ENCODE measurements at regions of chr2 and their contacts with region 1.

Region 1: DNA sequence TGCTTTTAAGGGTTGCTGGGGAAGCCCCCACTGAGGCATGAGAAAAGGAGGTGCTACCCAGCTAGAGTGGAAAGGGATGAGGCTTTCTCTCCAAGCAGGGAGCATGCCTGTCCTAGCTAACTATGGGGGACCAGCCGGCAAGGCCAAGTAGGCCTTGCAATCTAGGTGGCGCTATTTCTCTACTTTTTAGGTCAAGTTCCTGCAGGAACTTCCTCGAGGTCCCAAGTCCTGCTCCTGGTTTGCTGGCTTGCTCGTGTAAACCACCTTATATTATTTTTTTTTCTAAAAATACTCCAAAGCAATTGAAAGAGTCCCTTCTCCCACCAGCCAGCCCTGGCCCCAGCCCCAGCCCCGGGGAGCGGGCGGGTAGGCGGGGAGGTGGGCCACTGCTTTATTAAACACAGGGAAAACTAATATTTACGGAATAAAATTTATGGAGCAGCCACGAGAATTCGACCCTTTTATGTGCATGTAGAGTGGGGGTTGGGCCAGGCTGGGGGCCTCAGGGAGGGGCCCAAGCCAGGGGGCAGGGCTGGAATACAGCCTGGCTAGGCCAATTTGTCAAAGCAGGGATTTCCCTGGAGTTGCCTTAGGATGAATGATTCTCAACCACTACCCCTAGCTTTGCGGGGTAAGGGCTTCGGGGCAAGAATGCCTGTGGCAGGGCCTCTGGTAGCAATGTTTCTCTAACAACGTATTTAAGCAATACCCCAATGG is 12.8 kb upstream of the IHH start:
- DNase-seq: no peak
- H3K4me3 ChIP-seq: no peak overlapping the region
- H3K27ac ChIP-seq: no peak overlapping the region
- H3K4me1 ChIP-seq: peaks cover 13% of the 10 kb centered on the region
- H3K27me3 ChIP-seq: no peaks in the 10 kb centered on the region
- CTCF ChIP-seq: peak; percentile 70

Region 2: DNA sequence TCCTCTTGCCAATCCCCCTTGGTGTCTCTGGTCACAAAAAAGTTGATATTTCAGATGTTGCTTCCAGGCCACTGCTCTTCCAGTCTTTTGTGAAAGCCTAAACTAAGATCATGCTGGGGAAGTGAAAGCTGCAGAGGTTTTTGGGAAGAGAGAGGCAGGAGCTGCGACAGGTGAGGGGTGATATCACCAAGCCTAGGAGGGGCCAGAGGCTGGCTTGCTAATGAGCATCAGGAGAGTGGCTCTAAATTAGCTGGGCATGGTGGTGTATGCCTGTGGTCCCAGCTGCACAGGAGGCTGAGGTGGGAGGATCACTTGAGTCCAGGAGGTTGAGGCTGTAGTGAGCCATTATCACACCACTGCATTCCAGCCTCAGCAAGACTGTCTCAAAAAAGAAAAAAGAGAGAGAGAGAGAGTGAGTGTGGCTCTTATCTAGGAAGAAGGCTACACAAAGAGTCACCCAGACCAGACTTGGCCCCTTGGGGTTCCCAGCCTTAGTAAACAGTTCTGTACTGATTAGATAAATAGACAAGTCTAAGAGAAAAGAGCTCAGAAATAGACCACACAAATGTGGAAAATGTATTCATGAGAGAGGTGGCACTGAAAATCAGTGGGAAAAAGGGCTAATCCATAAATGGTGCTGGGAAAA is 128.7 kb before region 1 on chr2:
- CTCF ChIA-PET with region 1: interaction called, 12 read pairs
- POLR2A ChIA-PET with region 1: no interaction called
- intact Hi-C with region 1: no loop called
- DNase-seq: no peak
- H3K4me3 ChIP-seq: no peak overlapping the region
- H3K27ac ChIP-seq: no peak overlapping the region
- H3K4me1 ChIP-seq: no peaks in the 10 kb centered on the region
- H3K27me3 ChIP-seq: no peaks in the 10 kb centered on the region
- CTCF ChIP-seq: no peak

Region 3: DNA sequence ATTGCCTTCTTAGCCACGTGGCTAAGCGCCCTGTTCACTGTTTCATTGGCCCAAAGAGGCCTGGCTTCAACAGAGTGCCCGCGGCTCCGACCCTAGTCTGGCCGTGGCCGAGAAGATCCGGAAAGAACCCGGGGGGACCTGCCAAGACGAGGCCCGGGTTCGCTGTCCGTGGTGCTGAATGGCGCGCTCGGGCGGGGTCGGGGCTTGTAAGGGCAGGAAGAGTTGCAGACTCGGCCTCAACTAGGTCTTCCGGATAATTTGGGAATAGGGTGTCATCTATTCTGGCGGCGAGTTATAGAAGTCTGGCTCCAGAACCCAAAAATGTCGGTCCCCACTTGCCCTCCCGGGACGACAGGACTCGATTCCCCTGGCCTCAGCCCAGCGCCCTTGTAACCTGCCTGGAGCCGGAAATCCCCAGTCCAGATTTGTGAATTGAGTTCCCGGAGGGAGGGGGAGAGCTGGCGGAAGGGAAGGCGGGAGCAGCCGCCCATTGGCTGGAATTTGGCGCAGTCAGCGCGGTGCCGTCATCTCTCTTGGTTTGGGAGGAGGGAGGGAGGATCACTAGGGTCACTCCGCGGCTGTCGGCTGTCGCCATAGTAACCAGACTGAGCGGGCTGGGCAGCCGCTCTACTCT is 110.6 kb before region 1 on chr2:
- CTCF ChIA-PET with region 1: no interaction called
- POLR2A ChIA-PET with region 1: no interaction called
- intact Hi-C with region 1: no loop called
- DNase-seq: peak in 1 of 2 experiments; percentile 70
- H3K4me3 ChIP-seq: no peak overlapping the region
- H3K27ac ChIP-seq: no peak overlapping the region; the same call in 1 of the 2 replicates
- H3K4me1 ChIP-seq: peaks cover 17% of the 10 kb centered on the region
- H3K27me3 ChIP-seq: no peaks in the 10 kb centered on the region
- CTCF ChIP-seq: no peak

Region 4: GRCh38 chr2:219087361-219087760 is 13.8 kb after region 1 on chr2:
- CTCF ChIA-PET with region 1: no interaction called
- POLR2A ChIA-PET with region 1: no interaction called
- intact Hi-C with region 1: no loop called
- DNase-seq: no peak
- H3K4me3 ChIP-seq: no peak overlapping the region
- H3K27ac ChIP-seq: no peak overlapping the region
- H3K4me1 ChIP-seq: no peaks in the 10 kb centered on the region
- H3K27me3 ChIP-seq: no peaks in the 10 kb centered on the region
- CTCF ChIP-seq: no peak

Region 5: DNA sequence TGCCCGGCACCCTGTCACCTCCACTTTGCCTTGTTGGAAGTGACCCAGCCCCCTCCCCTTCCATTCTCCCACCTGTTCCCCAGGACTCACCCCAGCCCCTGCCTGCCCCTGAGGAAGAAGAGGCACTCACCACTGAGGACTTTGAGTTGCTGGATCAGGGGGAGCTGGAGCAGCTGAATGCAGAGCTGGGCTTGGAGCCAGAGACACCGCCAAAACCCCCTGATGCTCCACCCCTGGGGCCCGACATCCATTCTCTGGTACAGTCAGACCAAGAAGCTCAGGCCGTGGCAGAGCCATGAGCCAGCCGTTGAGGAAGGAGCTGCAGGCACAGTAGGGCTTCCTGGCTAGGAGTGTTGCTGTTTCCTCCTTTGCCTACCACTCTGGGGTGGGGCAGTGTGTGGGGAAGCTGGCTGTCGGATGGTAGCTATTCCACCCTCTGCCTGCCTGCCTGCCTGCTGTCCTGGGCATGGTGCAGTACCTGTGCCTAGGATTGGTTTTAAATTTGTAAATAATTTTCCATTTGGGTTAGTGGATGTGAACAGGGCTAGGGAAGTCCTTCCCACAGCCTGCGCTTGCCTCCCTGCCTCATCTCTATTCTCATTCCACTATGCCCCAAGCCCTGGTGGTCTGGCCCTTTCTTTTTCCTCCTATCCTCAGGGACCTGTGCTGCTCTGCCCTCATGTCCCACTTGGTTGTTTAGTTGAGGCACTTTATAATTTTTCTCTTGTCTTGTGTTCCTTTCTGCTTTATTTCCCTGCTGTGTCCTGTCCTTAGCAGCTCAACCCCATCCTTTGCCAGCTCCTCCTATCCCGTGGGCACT is 109.0 kb after region 1 on chr2:
- CTCF ChIA-PET with region 1: no interaction called
- POLR2A ChIA-PET with region 1: no interaction called
- intact Hi-C with region 1: no loop called
- DNase-seq: no peak
- H3K4me3 ChIP-seq: no peak overlapping the region
- H3K27ac ChIP-seq: no peak overlapping the region
- H3K4me1 ChIP-seq: peaks cover 9% of the 10 kb centered on the region
- H3K27me3 ChIP-seq: no peaks in the 10 kb centered on the region
- CTCF ChIP-seq: no peak